ENCODE measurements at regions of chr4 and their contacts with region 1.

Region 1: DNA sequence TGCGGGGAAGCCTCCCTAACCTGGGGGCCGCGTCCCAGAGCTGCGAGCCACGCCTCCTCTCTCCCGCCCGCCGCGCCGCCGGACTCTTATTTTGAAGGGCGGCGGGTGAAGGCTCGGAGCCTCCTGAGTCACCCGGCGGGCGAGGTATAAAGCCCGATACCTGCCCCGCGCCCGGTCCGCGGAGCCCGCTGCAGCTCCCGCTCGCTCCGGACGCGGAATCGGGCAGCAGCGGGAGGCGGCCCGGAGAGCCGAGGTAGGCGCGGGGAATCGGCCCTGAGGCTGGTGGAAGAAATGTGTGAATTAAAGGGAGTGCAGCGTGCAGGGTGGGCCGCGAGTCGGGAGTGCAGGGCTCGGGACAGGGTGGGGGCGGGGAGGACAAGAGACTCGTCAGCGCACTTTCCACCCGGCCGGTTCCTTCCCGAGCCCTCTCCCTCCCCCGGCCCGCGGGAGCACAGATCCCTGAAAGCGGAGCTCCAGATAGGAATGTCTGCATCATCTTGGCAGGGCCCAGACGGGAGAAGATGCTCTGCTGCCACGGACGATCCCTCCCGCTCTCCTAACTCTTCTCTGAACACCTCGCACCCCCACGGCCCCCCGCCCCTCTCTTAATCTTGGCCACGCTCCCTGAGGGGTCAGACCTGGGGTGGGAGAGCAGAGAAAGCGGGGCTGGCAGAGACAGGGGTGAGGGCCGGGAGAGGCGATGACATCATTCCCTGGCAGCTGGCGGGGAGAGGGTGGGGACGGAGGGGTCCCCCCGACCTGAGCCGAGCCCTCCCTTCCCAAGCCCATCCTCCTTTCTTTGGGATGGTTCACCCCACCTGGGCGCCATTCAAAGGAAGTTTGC is 177.9 kb downstream of the CBR4 start:
- H3K4me3 ChIP-seq: peak overlapping the region; percentile 87
- H3K27ac ChIP-seq: peak overlapping the region; percentile 83
- H3K4me1 ChIP-seq: peaks cover 8% of the 10 kb centered on the region
- CTCF ChIP-seq: no peak

Region 2: GRCh38 chr4:168817370-168817769 is 14.8 kb before region 1 on chr4:
- CTCF ChIA-PET with region 1: interaction called, 3 read pairs
- POLR2A ChIA-PET with region 1: interaction called, 18 read pairs
- H3K4me3 ChIP-seq: no peak overlapping the region
- H3K27ac ChIP-seq: no peak overlapping the region
- H3K4me1 ChIP-seq: peaks cover 11% of the 10 kb centered on the region
- CTCF ChIP-seq: no peak

Region 3: GRCh38 chr4:168886351-168886750 is 54.2 kb after region 1 on chr4:
- CTCF ChIA-PET with region 1: no interaction called
- POLR2A ChIA-PET with region 1: no interaction called
- H3K4me3 ChIP-seq: no peak overlapping the region
- H3K27ac ChIP-seq: no peak overlapping the region
- H3K4me1 ChIP-seq: no peaks in the 10 kb centered on the region
- CTCF ChIP-seq: no peak

Measured in HEK293 (cell line).